Prostate gland (tissue), 2 donors: ENCODE measurements at regions of chr16 and their contacts with region 1.

Region 1: DNA sequence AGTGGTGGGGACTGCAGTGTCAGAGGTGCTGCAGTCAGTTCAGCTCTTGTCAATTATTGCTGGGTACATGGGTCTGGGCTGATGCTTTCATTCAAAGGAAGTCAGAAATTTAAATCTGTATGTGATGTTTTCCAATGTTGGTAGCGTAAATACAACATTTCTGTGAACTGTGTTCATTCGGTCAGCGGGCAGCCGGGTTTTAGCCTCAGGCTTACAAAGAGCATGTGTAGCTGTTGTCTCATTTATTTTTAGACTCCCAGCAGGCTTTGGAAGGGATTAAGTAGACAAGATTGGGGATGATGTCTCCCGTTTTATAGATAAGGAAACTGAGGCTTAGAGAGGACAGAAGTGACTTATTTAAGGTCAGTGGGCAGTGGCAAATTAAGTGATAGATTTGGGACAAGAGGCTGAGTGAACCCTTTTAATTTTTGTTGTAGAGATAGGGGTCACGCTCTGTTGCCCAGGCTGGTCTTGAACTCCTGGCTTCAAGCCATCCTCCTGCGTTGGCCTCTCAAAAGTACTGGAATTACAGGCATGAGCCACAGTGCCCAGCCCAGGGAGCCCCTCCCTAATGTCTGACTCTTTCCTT is 8.1 kb downstream of the AQP8 start:
- DNase-seq: no peak
- H3K4me3 ChIP-seq: no peak overlapping the region
- H3K27ac ChIP-seq: no peak overlapping the region
- H3K4me1 ChIP-seq: no peaks in the 10 kb centered on the region
- H3K27me3 ChIP-seq: no peaks in the 10 kb centered on the region
- CTCF ChIP-seq: no peak
- POLR2A ChIP-seq: no peak

Region 2: DNA sequence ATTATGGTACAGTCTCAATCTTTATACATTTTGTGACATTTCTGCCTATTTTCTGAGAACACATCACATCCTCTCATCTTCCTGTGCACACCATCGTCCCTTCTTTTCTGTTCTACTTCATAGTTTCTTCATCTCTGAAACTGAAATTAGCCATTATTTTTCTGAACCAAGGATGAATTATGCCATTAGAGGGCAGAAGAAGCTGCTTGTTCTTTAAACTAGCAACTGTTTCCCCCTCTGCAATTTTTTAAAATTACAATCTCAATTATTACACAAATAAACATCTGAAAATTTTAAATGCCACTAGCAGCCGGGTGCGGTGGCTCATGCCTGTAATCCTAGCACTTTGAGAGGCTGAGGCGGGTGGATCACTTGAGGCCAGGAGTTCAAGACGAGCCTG is 644.2 kb before region 1 on chr16:
- intact Hi-C with region 1: loop called (anchors 10 kb)
- DNase-seq: no peak
- H3K4me3 ChIP-seq: no peak overlapping the region
- H3K27ac ChIP-seq: no peak overlapping the region
- H3K4me1 ChIP-seq: no peaks in the 10 kb centered on the region
- H3K27me3 ChIP-seq: no peaks in the 10 kb centered on the region
- CTCF ChIP-seq: peak in 3 of 4 experiments; percentile 9 to 31 (median 9)
- POLR2A ChIP-seq: no peak

Region 3: DNA sequence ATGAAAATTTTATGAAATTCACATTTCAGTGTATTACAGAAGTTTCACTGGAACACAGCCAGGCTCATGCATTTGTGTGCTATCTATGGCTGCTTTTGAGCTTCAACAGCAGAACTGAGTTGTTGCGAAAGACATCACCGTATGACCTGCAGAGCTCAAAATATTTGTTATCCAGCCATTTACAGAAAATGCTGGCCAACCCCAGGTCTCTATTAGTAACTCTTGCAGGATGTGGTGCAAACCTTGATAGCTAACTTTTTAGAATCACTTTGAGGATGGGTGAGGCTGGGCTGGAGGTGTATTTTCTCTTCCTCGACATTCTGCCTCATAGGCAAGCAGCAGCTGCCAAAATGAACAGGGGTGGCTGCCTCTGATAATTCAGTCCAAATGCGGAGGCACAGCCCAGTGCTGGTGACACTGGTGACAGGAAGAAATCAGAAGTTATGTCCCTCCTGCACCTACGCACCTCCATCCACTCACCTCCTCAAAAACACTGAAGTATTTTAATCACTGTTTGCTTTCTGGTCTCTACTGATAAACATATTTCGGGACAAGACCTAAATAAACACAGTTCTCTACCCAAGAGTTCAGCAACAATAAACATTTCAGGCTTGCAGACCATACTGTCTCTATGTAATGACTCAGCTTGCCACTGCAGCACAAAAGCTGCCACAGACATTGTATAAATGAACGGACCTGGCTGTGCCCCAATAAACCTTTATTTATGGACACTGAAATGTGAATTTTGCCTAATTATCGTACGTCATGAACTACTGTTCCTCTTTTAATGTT is 238.1 kb before region 1 on chr16:
- intact Hi-C with region 1: no loop called
- DNase-seq: no peak
- H3K4me3 ChIP-seq: no peak overlapping the region
- H3K27ac ChIP-seq: peak overlapping the region in 1 of 2 donors; percentile 9
- H3K4me1 ChIP-seq: peaks cover 13% of the 10 kb centered on the region
- H3K27me3 ChIP-seq: no peaks in the 10 kb centered on the region
- CTCF ChIP-seq: no peak
- POLR2A ChIP-seq: no peak

Region 4: DNA sequence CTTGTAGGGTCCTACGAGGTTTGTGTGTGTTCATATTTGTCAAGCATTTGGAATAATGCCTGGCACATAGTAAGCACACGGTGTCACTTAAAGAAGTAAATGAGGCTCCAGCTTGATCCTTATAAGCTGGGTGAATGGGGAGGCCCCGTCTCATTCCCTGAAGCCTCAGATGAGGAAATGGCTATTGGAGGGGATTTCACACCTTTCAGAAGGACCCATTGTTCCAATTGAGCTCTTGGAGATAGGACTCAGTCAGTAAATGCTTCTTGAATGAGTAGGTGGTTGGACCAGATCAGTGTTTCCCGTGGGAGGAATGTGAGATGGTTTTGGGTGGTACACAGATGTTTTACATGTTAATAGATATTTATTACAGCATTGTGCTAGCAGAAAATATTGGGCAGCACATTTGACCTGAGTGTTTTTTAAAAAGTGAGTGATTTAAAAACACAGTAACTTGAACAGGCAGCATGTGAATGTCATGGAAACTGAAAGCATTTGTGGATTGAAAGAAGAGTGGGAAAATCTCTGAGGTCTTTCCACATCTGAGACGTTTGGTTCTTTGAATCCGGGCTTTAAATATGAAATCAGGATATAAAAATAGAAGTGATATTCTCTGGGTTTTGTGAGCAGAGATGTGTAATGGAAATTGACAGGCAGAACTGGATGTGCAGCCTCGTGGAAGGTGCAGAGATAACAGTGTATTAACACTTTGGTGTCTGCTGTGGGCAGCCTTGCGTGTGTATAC is 173.2 kb before region 1 on chr16:
- intact Hi-C with region 1: loop called (anchors 5 kb)
- DNase-seq: no peak
- H3K4me3 ChIP-seq: no peak overlapping the region
- H3K27ac ChIP-seq: no peak overlapping the region
- H3K4me1 ChIP-seq: peaks cover 11% of the 10 kb centered on the region
- H3K27me3 ChIP-seq: no peaks in the 10 kb centered on the region
- CTCF ChIP-seq: no peak
- POLR2A ChIP-seq: no peak

Region 5: GRCh38 chr16:25126820-25127232 is 98.0 kb before region 1 on chr16:
- intact Hi-C with region 1: loop called (anchors 10 kb)
- DNase-seq: no peak
- H3K4me3 ChIP-seq: no peak overlapping the region
- H3K27ac ChIP-seq: no peak overlapping the region
- H3K4me1 ChIP-seq: no peaks in the 10 kb centered on the region
- H3K27me3 ChIP-seq: no peaks in the 10 kb centered on the region
- CTCF ChIP-seq: peak in 3 of 4 experiments; percentile 28 to 50 (median 45)
- POLR2A ChIP-seq: no peak